CD4-positive, alpha-beta memory T cell (primary cell): ENCODE measurements at regions of chr17 and their contacts with region 1.

Region 1: GRCh38 chr17:8248751-8249607 is at the start of gene PFAS:
- DNase-seq: peak; percentile 94 to 96 (median 94)
- H3K4me3 ChIP-seq: peak within 1 kb of the TSS; percentile 55 to 100
- H3K4me3 Mint-ChIP-seq: peak within 1 kb of the TSS; percentile 96 to 100 (median 98)
- H3K27ac ChIP-seq: peak within 1 kb of the TSS; percentile 98
- H3K27ac Mint-ChIP-seq: peak within 1 kb of the TSS; percentile 99 to 100 (median 100)
- H3K4me1 ChIP-seq: peaks cover 38% of the 10 kb centered on the region
- H3K4me1 Mint-ChIP-seq: peaks cover 33 to 68% (median 42%) of the 10 kb centered on the region in 4 donors
- H3K27me3 ChIP-seq: no peaks in the 10 kb centered on the region
- H3K27me3 Mint-ChIP-seq: peaks cover 0 to 7% of the 10 kb centered on the region in 2 donors
- total RNA-seq, gene PFAS: 23.0 to 29.1 TPM

Region 2: DNA sequence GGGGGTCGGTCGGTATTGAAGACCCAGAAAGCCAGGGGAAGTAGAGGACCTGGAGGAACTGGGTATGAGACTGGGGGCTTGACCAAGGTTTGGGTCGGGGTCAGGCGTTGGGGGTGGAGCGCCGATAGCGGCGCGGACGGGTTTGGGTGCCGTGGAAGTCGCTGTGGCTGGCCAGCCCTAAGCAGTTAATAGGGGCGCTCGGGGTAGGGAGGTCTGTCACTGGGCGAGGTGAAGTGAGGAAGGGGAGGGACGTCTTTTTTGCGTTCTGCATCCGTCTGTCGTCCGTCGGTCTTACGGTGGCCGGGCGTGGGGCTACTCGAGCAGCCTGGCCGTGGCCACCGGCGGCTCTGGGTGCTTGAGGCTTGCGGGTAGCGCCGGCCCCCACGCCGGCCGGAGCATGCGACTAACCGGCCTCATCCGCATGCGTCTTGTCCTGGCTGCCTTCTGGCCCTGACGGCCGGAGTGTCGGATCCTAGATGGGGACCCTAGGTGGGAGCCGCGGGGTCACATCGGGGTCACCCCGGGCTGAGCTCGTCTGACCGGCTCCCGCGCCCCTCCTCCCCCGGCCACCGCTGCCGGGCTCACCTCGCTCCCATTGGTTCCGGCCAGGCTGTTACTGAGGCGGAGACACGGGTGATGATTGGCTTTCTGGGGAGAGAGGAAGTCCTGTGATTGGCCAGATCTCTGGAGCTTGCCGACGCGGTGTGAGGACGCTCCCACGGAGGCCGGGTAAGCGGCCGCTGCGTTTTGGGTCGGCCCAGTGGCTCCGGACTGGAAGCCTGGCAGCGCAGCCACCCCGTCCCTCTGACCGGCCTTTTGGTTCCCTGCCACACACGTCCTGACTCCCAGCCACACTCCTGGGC is 404.5 kb before region 1 on chr17:
- CTCF ChIA-PET with region 1: no interaction called
- POLR2A ChIA-PET with region 1: no interaction called
- intact Hi-C with region 1: loop called (anchors 5 kb)
- DNase-seq: peak; percentile 82 to 87 (median 85)
- H3K4me3 ChIP-seq: peak overlapping the region; percentile 57 to 92
- H3K4me3 Mint-ChIP-seq: peak overlapping the region; percentile 92 to 99 (median 97)
- H3K27ac ChIP-seq: peak overlapping the region; percentile 99
- H3K27ac Mint-ChIP-seq: peak overlapping the region; percentile 99 to 100 (median 100)
- H3K4me1 ChIP-seq: peaks cover 30% of the 10 kb centered on the region
- H3K4me1 Mint-ChIP-seq: peaks cover 21 to 50% (median 35%) of the 10 kb centered on the region in 4 donors
- H3K27me3 ChIP-seq: no peaks in the 10 kb centered on the region
- H3K27me3 Mint-ChIP-seq: peaks cover 0 to 3% of the 10 kb centered on the region in 2 donors

Region 3: DNA sequence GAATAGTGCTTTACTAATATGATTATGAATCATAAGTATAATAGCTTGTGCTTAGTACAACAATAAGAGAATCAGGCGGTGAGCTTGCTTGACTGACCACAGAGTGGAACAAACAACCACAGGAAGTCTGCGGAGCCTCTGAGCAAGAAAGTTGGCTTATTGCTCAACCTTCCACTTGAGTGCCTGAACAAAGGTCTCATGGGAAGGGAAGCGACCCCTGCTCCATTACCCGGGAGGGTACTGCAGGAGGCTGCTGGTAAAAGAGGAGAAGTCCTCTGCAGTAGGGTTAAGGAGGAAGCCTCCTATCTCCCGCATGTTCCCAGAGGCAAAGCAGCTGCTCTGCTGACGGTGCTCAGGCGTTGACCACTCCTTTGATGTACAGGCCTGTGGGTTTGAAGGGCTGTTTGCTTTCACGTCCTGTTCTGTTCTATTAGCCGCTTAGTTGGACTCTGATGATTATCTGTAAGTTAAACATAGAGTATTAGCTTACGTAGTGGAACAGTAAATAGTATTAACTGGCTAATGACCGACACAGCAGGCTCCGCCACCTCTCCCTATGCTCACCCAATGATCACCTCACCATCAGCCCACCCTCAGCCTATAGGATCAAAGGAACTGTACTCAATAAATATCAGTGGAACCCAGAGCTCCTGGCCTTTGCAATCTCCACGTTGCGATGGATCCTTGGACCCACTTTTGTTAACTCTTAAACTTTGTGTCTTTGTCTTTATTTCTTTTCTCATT is 192.6 kb before region 1 on chr17:
- CTCF ChIA-PET with region 1: no interaction called
- POLR2A ChIA-PET with region 1: no interaction called
- intact Hi-C with region 1: no loop called
- DNase-seq: no peak
- H3K4me3 ChIP-seq: no peak overlapping the region
- H3K4me3 Mint-ChIP-seq: no peak overlapping the region
- H3K27ac ChIP-seq: no peak overlapping the region
- H3K27ac Mint-ChIP-seq: peak overlapping the region in 2 of 7 donors; percentile 17 to 26
- H3K4me1 ChIP-seq: peaks cover 7% of the 10 kb centered on the region
- H3K4me1 Mint-ChIP-seq: peaks cover 1 to 16% (median 3%) of the 10 kb centered on the region in 4 donors
- H3K27me3 ChIP-seq: peaks cover 22% of the 10 kb centered on the region
- H3K27me3 Mint-ChIP-seq: peaks cover 22 to 25% of the 10 kb centered on the region in 2 donors

Region 4: GRCh38 chr17:8151123-8151640 is 97.8 kb before region 1 on chr17:
- CTCF ChIA-PET with region 1: interaction called, 3 read pairs
- POLR2A ChIA-PET with region 1: interaction called, 70 read pairs
- intact Hi-C with region 1: loop called (anchors 5 kb)
- DNase-seq: peak; percentile 92 to 96 (median 94)
- H3K4me3 ChIP-seq: peak overlapping the region; percentile 74 to 89
- H3K4me3 Mint-ChIP-seq: peak overlapping the region in 7 of 8 donors; percentile 91 to 98 (median 93)
- H3K27ac ChIP-seq: peak overlapping the region; percentile 100
- H3K27ac Mint-ChIP-seq: no peak overlapping the region
- H3K4me1 ChIP-seq: peaks cover 54% of the 10 kb centered on the region
- H3K4me1 Mint-ChIP-seq: peaks cover 30 to 58% (median 39%) of the 10 kb centered on the region in 4 donors
- H3K27me3 ChIP-seq: no peaks in the 10 kb centered on the region
- H3K27me3 Mint-ChIP-seq: no peaks in the 10 kb centered on the region

Region 5: DNA sequence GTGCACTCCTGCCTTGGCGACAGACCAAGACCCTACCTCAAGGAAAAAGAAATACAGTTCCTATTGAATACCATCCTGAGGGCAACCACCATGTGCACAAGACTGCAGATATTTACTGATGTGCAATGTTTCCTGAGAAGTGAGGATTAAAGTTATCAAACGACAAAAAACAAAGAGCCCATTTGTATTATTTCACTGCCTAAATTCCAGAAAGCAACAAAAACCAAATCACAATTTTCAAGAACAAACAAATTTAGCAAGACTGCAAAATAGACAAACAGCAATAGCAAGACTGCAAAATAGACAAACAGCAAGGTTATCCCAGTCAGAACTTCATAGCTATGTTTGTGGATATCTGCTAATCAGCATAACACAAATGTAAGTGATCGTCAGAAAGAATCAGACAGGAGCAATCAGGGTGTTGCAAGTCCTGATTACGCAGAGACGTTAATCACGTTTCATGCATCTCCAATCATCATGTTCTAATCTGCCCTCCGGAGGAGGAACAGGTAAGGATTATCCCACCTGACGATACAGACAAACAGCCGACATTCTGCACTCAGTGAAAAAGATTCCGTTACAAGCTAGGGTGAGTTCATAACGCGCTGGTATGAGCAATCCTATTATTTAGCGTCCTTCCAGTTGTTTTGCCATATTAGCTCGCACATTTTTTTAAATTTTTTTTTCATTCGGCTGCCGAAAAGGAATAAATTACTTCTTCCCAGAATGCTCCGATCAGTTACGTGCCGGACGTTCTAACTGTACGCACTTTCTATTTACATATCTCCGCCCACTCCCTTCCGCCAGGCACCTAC is 75.7 kb before region 1 on chr17:
- CTCF ChIA-PET with region 1: no interaction called
- POLR2A ChIA-PET with region 1: interaction called, 31 read pairs
- intact Hi-C with region 1: no loop called
- DNase-seq: peak; percentile 91 to 94 (median 92)
- H3K4me3 ChIP-seq: peak overlapping the region; percentile 12 to 52
- H3K4me3 Mint-ChIP-seq: peak overlapping the region; percentile 84 to 94 (median 90)
- H3K27ac ChIP-seq: peak overlapping the region; percentile 99
- H3K27ac Mint-ChIP-seq: peak overlapping the region; percentile 98 to 100 (median 100)
- H3K4me1 ChIP-seq: peaks cover 45% of the 10 kb centered on the region
- H3K4me1 Mint-ChIP-seq: peaks cover 30 to 61% (median 43%) of the 10 kb centered on the region in 4 donors
- H3K27me3 ChIP-seq: no peaks in the 10 kb centered on the region
- H3K27me3 Mint-ChIP-seq: no peaks in the 10 kb centered on the region

Region 6: DNA sequence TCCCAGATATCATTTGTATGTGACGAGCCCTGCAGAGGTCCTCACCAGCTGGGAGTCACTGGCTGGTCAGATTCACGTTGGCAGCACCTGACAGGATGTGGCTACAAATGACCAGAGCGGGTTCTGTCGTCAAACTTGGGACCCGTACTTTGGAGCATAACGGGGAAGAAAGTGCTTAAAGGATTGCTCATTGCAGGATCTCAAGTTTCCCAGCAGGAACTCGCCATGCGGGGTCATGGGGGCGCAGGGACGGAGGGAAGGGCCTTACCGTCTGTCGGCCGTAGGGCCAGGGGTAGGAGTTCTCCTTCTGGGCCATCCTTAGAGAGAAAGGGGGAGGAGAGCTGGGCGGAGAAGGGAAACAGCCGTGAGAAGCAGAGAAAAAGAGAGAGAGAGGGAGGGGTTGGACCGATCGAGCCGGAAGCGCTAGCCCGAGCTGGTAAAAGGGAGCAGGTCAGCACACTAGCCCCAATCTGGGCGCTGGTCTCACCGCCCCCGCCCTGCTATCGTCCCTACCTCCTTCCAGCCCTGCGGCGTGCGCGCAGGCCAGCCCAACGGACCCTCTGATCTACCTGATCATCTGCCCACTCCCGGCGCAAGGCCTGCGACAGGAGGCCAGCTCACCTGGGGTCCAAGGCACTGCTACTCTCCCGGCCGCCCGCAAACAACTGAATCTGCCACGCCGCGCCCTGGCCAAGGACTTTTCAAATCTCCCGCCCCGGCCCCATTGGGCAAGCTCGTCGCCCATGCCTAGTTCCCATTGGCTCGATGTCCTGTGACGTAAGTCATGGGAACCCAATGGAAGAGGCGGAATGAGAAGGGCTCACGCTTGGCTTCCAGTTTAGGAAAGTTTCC is 38.8 kb before region 1 on chr17 and contains the start of gene AURKB:
- CTCF ChIA-PET with region 1: no interaction called
- POLR2A ChIA-PET with region 1: interaction called, 30 read pairs
- intact Hi-C with region 1: no loop called
- DNase-seq: peak; percentile 90 to 98 (median 90)
- H3K4me3 ChIP-seq: peak within 1 kb of the TSS; percentile 71 to 83
- H3K4me3 Mint-ChIP-seq: peak within 1 kb of the TSS; percentile 85 to 96 (median 92)
- H3K27ac ChIP-seq: peak within 1 kb of the TSS; percentile 69
- H3K27ac Mint-ChIP-seq: peak within 1 kb of the TSS; percentile 82 to 95 (median 94)
- H3K4me1 ChIP-seq: peaks cover 15% of the 10 kb centered on the region
- H3K4me1 Mint-ChIP-seq: peaks cover 13 to 21% (median 17%) of the 10 kb centered on the region in 4 donors
- H3K27me3 ChIP-seq: no peaks in the 10 kb centered on the region
- H3K27me3 Mint-ChIP-seq: no peaks in the 10 kb centered on the region
- total RNA-seq, gene AURKB: 0.67 to 0.83 TPM

Region 7: DNA sequence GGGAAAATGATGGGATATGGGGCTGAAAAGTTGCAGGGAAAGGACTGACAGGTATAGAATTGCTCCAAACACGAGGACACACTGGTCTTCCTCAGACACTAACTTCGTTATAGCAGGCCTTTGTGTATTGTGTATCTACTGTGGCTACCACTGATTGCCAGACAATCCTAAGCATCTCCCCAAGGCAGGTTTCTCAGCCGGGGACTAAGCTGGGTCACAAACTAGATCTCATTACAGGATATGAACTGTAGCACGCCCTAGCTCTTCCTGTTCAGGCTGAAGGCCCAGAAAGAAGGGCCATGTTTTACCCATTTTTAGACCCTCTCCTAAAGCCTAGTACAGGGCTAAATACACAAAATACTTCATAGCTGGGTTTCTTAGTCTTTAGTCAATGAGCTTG is 34.4 kb after region 1 on chr17:
- CTCF ChIA-PET with region 1: interaction called, 4 read pairs
- POLR2A ChIA-PET with region 1: interaction called, 100 read pairs
- intact Hi-C with region 1: loop called (anchors 1 kb)
- DNase-seq: peak in 1 of 5 donors; percentile 12
- H3K4me3 ChIP-seq: no peak overlapping the region
- H3K4me3 Mint-ChIP-seq: peak overlapping the region in 4 of 8 donors; percentile 12 to 56 (median 40)
- H3K27ac ChIP-seq: no peak overlapping the region
- H3K27ac Mint-ChIP-seq: peak overlapping the region; percentile 29 to 92 (median 85)
- H3K4me1 ChIP-seq: peaks cover 37% of the 10 kb centered on the region
- H3K4me1 Mint-ChIP-seq: peaks cover 15 to 49% (median 27%) of the 10 kb centered on the region in 4 donors
- H3K27me3 ChIP-seq: no peaks in the 10 kb centered on the region
- H3K27me3 Mint-ChIP-seq: no peaks in the 10 kb centered on the region

Region 8: GRCh38 chr17:8300627-8301242 is 51.8 kb after region 1 on chr17:
- CTCF ChIA-PET with region 1: interaction called, 116 read pairs
- POLR2A ChIA-PET with region 1: interaction called, 99 read pairs
- intact Hi-C with region 1: loop called (anchors 1 kb)
- DNase-seq: peak; percentile 62 to 76 (median 72)
- H3K4me3 ChIP-seq: no peak overlapping the region
- H3K4me3 Mint-ChIP-seq: peak overlapping the region in 2 of 8 donors; percentile 2
- H3K27ac ChIP-seq: no peak overlapping the region
- H3K27ac Mint-ChIP-seq: peak overlapping the region in 6 of 7 donors; percentile 47 to 90 (median 83)
- H3K4me1 ChIP-seq: peaks cover 7% of the 10 kb centered on the region
- H3K4me1 Mint-ChIP-seq: peaks cover 7 to 16% (median 11%) of the 10 kb centered on the region in 4 donors
- H3K27me3 ChIP-seq: no peaks in the 10 kb centered on the region
- H3K27me3 Mint-ChIP-seq: peaks cover 0 to 1% of the 10 kb centered on the region in 2 donors